T-cell (primary cell): ENCODE measurements at regions of chr11 and their contacts with region 1.

Region 1: GRCh38 chr11:119205574-119206510 is at the start of gene CBL:
- DNase-seq: peak; percentile 84 to 99 (median 96)
- ATAC-seq: peak; percentile 87 to 92 (median 90)
- H3K4me3 ChIP-seq: peak within 1 kb of the TSS; percentile 70 to 95
- H3K4me3 Mint-ChIP-seq: peak within 1 kb of the TSS; percentile 93 to 100 (median 95)
- H3K27ac ChIP-seq: peak within 1 kb of the TSS; percentile 51
- H3K27ac Mint-ChIP-seq: peak within 1 kb of the TSS; percentile 86 to 89
- H3K4me1 ChIP-seq: peaks cover 17 to 27% of the 10 kb centered on the region in 2 experiments
- H3K4me1 Mint-ChIP-seq: peaks cover 39 to 47% (median 44%) of the 10 kb centered on the region in 3 donors
- H3K27me3 ChIP-seq: no peaks in the 10 kb centered on the region
- H3K27me3 Mint-ChIP-seq: no peaks in the 10 kb centered on the region
- total RNA-seq, gene CBL: 40.9 to 42.2 (median 41.1) TPM

Region 2: DNA sequence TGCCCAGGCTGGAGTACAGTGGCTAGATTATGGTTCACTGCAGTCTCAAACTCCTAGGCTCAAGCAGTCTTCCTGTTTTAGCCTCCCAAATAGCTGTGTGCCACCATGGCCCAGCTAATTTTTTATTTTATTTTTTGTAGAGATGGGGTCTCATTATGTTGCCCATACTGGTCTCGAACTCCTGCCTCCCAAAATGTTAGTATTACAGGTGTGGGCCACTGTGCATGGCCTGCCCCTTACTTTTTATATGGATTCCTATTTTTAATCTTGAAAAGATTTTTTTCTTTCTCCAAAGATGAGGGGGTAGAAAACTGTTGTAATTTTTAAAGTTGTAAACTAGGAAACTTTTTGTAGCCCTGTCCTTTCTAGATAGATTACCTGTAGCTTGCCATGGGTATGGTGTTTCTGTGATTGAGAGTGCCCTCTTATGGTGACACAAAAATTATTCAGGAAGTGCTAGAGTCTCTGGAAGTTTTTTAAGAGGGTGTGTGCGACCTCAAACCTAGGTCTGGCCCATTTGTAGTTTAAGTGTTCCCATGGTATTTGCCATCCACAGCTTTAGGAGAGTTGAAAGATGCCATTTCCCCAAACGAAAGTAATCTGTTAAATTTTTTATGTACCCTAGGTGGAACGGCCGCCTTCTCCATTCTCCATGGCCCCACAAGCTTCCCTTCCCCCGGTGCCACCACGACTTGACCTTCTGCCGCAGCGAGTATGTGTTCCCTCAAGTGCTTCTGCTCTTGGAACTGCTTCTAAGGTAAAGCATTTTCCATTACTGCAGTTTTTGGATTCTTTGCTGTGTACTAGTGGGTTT is 78.7 kb after region 1 on chr11:
- CTCF ChIA-PET with region 1: interaction called, 5 to 25 read pairs
- POLR2A ChIA-PET with region 1: no interaction called
- DNase-seq: peak in 11 of 35 experiments; percentile 7 to 75 (median 15)
- ATAC-seq: peak; percentile 91 to 97 (median 94)
- H3K4me3 ChIP-seq: no peak overlapping the region
- H3K4me3 Mint-ChIP-seq: no peak overlapping the region
- H3K27ac ChIP-seq: no peak overlapping the region
- H3K27ac Mint-ChIP-seq: peak overlapping the region; percentile 37 to 69
- H3K4me1 ChIP-seq: peaks cover 10 to 21% of the 10 kb centered on the region in 2 experiments
- H3K4me1 Mint-ChIP-seq: peaks cover 26 to 39% (median 30%) of the 10 kb centered on the region in 3 donors
- H3K27me3 ChIP-seq: no peaks in the 10 kb centered on the region
- H3K27me3 Mint-ChIP-seq: no peaks in the 10 kb centered on the region

Region 3: GRCh38 chr11:119323538-119324033 is 117.7 kb after region 1 on chr11:
- CTCF ChIA-PET with region 1: interaction called, 5 to 12 read pairs
- POLR2A ChIA-PET with region 1: interaction called in 1 of 2 experiments, 3 read pairs
- DNase-seq: peak; percentile 44 to 85 (median 75)
- ATAC-seq: peak in 2 of 4 experiments; percentile 8 to 23
- H3K4me3 ChIP-seq: no peak overlapping the region
- H3K4me3 Mint-ChIP-seq: peak overlapping the region in 1 of 3 donors; percentile 31
- H3K27ac ChIP-seq: no peak overlapping the region
- H3K27ac Mint-ChIP-seq: no peak overlapping the region
- H3K4me1 ChIP-seq: peaks cover 2 to 35% of the 10 kb centered on the region in 2 experiments
- H3K4me1 Mint-ChIP-seq: peaks cover 20 to 27% (median 20%) of the 10 kb centered on the region in 3 donors
- H3K27me3 ChIP-seq: peaks cover 0 to 20% of the 10 kb centered on the region in 2 experiments
- H3K27me3 Mint-ChIP-seq: peaks cover 3 to 5% of the 10 kb centered on the region in 2 donors

Region 4: GRCh38 chr11:119709638-119710346 is 503.9 kb after region 1 on chr11:
- CTCF ChIA-PET with region 1: no interaction called
- POLR2A ChIA-PET with region 1: no interaction called
- DNase-seq: no peak
- ATAC-seq: no peak
- H3K4me3 ChIP-seq: peak overlapping the region in 1 of 2 donors; percentile 15
- H3K4me3 Mint-ChIP-seq: no peak overlapping the region
- H3K27ac ChIP-seq: no peak overlapping the region
- H3K27ac Mint-ChIP-seq: no peak overlapping the region
- H3K4me1 ChIP-seq: peaks cover 0 to 9% of the 10 kb centered on the region in 2 experiments
- H3K4me1 Mint-ChIP-seq: peaks cover 0 to 7% (median 2%) of the 10 kb centered on the region in 3 donors
- H3K27me3 ChIP-seq: peaks cover 0 to 43% of the 10 kb centered on the region in 2 experiments
- H3K27me3 Mint-ChIP-seq: peaks cover 23 to 41% of the 10 kb centered on the region in 2 donors